Vagina (tissue), 2 donors: ENCODE measurements at regions of chr1 and their contacts with region 1.

Region 1: DNA sequence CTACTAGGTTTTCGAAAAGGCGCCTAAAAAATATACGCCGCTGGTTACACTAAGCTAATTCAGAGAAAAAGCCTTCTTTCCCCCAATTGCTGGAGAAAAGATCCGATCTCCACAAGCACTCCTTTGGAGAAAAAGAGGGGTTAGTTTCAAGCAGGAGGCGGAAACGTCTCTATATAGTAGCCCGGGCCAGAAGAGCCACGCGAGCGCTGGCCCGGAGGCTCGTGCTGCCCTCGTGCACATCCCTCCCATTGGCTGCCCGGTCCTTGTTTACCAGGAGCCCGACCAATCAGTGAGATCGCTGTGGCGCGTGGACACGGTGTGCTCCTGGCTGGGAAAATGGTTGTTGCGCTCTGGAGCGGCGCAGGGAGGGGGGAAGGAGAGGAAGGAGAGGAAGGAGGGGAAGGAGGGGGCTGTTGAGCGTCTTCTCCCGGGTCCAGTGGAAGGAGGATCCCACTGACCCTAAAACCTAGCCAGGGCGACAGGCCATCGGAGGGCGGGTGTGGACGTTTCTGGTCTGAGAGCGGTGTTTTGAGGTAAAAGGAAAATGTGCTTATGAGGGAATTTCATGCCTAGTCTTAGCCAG is at the start of gene TXNIP:
- DNase-seq: peak; percentile 99 to 100
- H3K4me3 ChIP-seq: peak within 1 kb of the TSS; percentile 83 to 89
- H3K27ac ChIP-seq: peak within 1 kb of the TSS; percentile 96
- H3K4me1 ChIP-seq: peaks cover 63% of the 10 kb centered on the region
- H3K27me3 ChIP-seq: no peaks in the 10 kb centered on the region
- CTCF ChIP-seq: no peak
- POLR2A ChIP-seq: peak in 1 of 2 donors; percentile 94
- total RNA-seq, gene TXNIP: 1,858 TPM

Region 2: DNA sequence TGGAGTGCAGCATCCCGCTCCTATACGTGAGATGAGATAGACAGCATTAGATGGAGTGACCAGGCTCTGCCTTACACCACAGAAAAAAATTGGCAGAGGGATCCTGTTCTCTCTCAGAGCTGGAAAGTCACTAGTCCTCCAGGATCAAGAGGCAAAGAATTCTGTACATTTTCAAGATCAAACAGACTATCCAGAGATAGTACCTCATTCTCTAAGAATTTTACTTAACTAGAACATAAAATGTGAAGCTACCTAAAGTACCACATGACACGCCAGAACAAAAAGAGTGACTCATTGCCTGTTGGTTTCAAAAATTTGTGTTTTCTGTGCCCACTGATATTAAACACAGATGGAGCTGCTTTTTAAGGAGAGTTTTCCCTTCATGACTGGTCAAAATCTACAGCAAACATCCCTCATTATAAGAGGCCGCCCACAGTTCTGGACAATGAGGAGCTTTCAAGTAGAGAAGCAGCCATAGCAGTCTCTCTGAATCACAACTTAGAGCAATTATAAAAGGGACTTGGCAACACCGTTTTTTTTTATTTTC is 245.0 kb before region 1 on chr1:
- intact Hi-C with region 1: no loop called
- DNase-seq: no peak
- H3K4me3 ChIP-seq: no peak overlapping the region
- H3K27ac ChIP-seq: peak overlapping the region; percentile 51
- H3K4me1 ChIP-seq: peaks cover 6% of the 10 kb centered on the region
- H3K27me3 ChIP-seq: no peaks in the 10 kb centered on the region
- CTCF ChIP-seq: no peak
- POLR2A ChIP-seq: no peak

Region 3: DNA sequence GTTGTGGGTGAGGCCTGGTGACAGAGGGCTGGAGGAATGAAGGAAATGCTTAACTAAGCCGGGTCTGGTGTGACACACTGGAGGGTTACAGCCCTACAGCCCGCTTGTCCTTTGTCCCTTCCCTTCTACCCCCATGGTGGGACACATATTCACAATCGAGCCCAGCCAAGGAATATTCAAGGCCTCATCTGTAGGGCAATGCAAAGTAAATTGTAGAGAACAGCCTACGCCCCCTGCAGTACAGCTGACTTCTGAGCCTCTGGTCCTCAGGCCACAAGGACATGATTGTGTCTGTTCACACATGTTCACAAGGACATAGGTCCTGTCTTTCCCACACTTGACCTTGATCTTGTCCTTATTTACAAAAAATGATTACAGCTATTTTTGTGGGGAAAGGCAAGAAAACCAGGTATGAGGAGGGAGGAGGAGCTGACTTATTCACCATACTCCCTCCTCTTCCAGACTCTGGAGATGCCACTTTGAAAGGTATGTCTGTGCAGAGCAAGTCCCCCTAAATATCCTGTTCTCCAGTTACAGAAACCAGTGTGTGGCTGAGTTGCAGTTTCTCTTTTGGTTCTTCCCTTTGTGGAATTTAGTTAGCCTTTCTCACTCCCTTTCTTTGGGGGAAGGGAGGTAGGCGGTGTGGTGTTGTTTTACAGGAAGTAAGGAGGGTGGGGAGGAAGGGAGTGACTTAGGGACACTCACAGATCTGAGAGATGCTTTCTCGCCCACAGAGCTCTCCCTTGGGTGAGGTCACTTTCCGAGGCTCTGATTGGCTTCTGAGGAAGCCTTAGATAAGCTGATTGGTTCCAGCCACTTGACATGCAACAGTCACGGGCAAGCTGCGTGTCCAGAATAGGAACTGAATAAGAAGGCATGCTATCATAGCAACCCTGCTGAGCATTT is 17.4 kb before region 1 on chr1:
- intact Hi-C with region 1: loop called (anchors 2 kb)
- DNase-seq: peak in 1 of 2 donors; percentile 100
- H3K4me3 ChIP-seq: peak overlapping the region; percentile 24 to 45
- H3K27ac ChIP-seq: peak overlapping the region; percentile 95
- H3K4me1 ChIP-seq: peaks cover 52% of the 10 kb centered on the region
- H3K27me3 ChIP-seq: no peaks in the 10 kb centered on the region
- CTCF ChIP-seq: no peak
- POLR2A ChIP-seq: peak; percentile 8 to 68

Region 4: DNA sequence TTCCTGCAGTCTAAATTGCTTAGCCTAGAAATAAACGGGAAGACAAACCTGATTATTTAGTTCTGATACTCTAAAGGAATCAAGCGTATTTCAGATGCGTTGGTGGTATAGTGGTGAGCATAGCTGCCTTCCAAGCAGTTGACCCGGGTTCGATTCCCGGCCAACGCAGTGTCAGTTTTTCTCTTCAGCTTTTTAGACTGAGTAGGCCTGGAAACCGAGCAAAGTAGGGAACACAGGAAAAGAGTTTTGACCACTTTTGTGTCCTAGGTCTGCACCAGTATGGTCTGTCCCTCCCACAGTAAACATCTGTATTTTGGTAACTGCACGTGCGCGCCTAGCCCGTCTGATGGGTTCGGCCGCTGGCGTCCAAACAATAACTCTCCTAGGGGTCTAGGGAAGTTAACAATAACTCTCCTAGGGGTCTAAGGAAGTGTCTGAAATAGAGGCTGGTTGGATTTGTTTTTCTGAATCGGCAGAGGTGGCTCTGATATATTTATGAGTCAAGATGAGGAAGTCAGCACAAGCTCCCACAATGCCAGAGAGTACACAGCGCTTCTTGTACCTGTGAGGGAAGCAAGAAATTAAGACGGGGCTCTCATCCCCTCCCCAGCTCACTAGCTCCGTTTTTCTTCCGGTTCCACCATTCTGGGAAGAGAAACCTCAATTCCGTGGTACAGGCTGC is 40.6 kb after region 1 on chr1:
- intact Hi-C with region 1: loop called (anchors 5 kb)
- DNase-seq: no peak
- H3K4me3 ChIP-seq: peak overlapping the region; percentile 68 to 69
- H3K27ac ChIP-seq: peak overlapping the region; percentile 92
- H3K4me1 ChIP-seq: peaks cover 10% of the 10 kb centered on the region
- H3K27me3 ChIP-seq: no peaks in the 10 kb centered on the region
- CTCF ChIP-seq: no peak
- POLR2A ChIP-seq: no peak